ENCODE measurements at regions of chr1 and their contacts with region 1.

Region 1: DNA sequence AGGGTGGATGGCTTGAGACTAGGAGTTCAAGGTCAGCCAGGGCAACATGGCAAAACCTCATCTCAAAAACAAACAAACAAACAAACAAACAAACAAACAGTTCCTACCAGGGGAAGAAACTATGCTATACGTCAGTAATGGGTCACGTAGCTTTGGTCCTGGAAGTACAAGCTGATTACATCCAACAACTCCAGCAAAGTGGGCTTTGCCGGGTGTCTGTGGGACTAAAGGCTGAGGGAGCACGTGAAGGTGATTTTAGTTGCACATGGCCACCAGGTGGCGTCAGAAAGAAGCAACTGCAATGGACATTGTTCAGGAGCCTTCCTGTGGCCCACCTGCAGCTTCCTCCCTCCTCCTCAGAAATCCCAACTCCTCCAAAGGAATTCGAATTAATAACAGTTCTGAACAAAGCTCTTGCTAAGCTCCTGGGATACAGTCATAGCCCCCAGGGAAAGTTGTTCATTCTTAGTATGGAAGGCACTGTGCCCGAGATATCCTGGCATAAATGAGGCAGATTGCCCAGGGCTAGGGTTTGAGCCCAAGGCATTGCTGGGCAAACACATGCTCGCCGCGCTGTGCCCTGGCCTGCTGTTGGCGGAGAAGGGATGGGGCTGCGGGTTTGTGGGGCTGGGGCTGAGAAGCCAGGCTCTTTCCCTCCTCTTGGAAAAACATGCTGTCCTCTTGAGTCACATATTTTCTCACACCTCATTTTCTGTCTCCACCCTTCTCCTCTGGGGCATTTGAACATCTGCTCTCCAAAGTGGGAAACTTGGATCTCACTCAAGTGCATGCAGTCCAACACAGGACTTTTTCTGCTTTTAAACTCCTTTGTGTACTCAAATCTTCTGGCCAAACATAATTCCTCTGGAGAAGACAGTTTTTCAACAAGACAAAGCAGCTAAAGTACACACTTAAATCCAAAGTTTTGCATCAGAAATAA is 28.6 kb downstream of the AKNAD1 start:
- DNase-seq: peak; percentile 60 to 91 (median 77)
- H3K4me3 ChIP-seq: no peak overlapping the region
- H3K27ac ChIP-seq: no peak overlapping the region
- H3K4me1 ChIP-seq: no peaks in the 10 kb centered on the region
- H3K27me3 ChIP-seq: no peaks in the 10 kb centered on the region
- CTCF ChIP-seq: peak; percentile 88

Region 2: GRCh38 chr1:108901106-108901505 is 72.8 kb after region 1 on chr1:
- intact Hi-C with region 1: loop called (anchors 10 kb)
- DNase-seq: no peak
- H3K4me3 ChIP-seq: no peak overlapping the region
- H3K27ac ChIP-seq: no peak overlapping the region
- H3K4me1 ChIP-seq: no peaks in the 10 kb centered on the region
- H3K27me3 ChIP-seq: no peaks in the 10 kb centered on the region
- CTCF ChIP-seq: no peak

Measured in kidney (tissue), 22 donors.